GM10248 (cell line): ENCODE measurements at regions of chr3 and their contacts with region 1.

Region 1: DNA sequence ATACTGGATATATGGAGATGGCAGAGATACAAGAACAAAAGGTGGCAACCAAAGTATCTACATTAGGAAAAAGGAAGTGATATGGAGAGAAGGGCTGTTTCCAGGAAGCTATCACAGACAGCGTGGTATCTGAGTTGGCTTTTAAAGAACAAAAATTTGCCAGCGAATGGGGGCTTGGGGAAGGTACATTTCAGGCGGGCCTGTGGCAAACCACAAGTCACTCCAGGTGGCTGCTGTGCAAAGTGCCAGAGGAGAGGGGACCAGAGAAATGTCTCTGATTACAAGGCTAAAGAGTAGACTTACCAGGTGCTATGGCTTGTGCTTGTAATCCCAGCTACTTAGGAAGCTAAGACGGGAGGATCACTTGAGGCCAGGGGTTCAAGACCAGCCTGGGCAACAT is 91.1 kb downstream of the MSL2 start:
- DNase-seq: no peak
- CTCF ChIP-seq: no peak

Region 2: DNA sequence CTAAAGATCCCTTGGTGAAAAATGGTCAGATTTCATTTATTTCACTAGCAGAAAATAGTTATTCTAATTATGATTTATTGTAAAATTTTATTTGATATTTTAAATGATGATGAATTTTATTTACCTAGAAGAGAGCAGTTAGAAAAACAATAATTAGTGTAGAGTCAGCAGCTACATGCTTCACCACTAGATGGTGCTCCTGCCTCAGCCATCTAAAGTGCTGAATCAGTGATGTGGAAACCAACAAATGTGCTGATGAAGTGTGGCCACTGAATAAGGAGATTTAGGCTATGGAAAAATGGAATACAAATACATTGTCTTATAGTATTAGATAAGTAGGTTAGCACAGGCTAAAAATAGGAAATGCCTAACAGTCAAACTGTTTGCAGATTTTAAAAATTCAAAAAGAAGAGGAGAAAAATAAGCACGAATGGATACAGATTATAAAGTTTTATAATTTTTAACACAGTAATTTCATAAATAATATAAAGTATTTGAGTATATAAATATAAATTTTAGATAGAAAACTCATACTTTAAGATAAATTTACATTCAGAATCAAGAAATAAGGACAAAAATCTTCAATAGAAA is 29.7 kb before region 1 on chr3:
- CTCF ChIA-PET with region 1: no interaction called
- POLR2A ChIA-PET with region 1: no interaction called
- DNase-seq: peak; percentile 49
- CTCF ChIP-seq: peak; percentile 93

Region 3: GRCh38 chr3:136250226-136250902 is 145.3 kb after region 1 on chr3 and contains the start of gene PCCB:
- CTCF ChIA-PET with region 1: no interaction called
- POLR2A ChIA-PET with region 1: interaction called, 10 read pairs
- DNase-seq: peak; percentile 94
- CTCF ChIP-seq: peak; percentile 82